ENCODE measurements at regions of chr17 and their contacts with region 1.

Region 1: GRCh38 chr17:27778193-27778592 is 22.1 kb downstream of the NOS2 start:
- DNase-seq: no peak
- H3K4me3 ChIP-seq: no peak overlapping the region
- H3K27ac ChIP-seq: no peak overlapping the region
- H3K4me1 ChIP-seq: no peaks in the 10 kb centered on the region
- H3K27me3 ChIP-seq: no peaks in the 10 kb centered on the region
- CTCF ChIP-seq: no peak
- POLR2A ChIP-seq: no peak

Region 2: DNA sequence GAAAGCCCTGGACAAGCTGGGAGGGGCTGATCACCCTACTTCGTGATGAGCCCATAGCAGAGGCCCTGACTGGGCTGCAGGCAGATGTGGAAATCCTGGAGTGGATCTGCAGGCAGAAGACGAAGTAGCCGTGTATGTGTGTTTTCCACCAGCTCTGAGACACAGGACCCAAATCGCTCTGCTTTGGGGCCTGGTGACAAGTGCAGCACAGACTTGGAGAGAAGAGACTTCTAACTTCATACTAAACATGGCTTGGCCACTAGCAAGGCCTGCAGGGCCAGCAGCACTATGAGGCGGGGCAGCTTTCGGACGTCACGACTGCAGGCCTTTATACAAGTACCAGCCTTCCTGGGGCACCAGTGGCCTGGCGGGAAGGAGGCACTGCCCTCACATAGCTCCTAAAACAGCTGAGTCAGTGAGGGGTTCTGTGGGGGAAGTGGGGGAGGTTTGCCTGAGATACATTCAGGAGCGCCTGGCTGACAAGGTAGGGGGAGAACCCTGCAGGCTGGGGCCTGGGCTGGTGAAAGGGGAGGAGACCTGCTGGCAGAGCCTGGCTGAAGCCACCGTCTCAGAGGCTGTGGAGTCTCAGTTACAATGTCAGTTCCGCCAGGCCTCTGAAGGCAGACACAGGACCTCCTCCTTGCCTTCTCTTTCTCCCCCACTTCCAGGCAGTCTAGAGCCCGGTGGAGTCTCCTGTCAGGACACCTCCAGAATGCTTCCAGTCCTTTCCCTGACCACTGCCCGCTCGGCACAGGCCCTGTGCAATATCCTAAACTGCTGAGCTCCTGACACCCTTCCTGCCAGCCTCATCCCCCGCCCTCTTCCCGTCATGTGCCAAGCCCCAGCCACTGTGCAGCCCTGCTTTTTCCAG is 410.8 kb before region 1 on chr17:
- intact Hi-C with region 1: loop called (anchors 10 kb)
- DNase-seq: no peak
- H3K4me3 ChIP-seq: no peak overlapping the region
- H3K27ac ChIP-seq: no peak overlapping the region
- H3K4me1 ChIP-seq: no peaks in the 10 kb centered on the region
- H3K27me3 ChIP-seq: no peaks in the 10 kb centered on the region
- CTCF ChIP-seq: no peak
- POLR2A ChIP-seq: no peak

Measured in prostate gland (tissue), 2 donors.